ENCODE measurements at regions of chr2 and their contacts with region 1.

Region 1: GRCh38 chr2:212665948-212666347 is 127.3 kb upstream of the ERBB4 start:
- DNase-seq: no peak
- ATAC-seq: no peak
- H3K4me3 ChIP-seq: no peak overlapping the region
- H3K4me3 Mint-ChIP-seq: no peak overlapping the region
- H3K27ac ChIP-seq: no peak overlapping the region
- H3K27ac Mint-ChIP-seq: no peak overlapping the region
- H3K4me1 ChIP-seq: no peaks in the 10 kb centered on the region
- H3K4me1 Mint-ChIP-seq: no peaks in the 10 kb centered on the region
- H3K27me3 ChIP-seq: no peaks in the 10 kb centered on the region
- H3K27me3 Mint-ChIP-seq: peaks cover 8% of the 10 kb centered on the region
- CTCF ChIP-seq: no peak

Region 2: GRCh38 chr2:212556296-212556695 is 109.7 kb before region 1 on chr2:
- CTCF ChIA-PET with region 1: no interaction called
- POLR2A ChIA-PET with region 1: no interaction called
- intact Hi-C with region 1: no loop called
- DNase-seq: no peak
- ATAC-seq: no peak
- H3K4me3 ChIP-seq: no peak overlapping the region
- H3K4me3 Mint-ChIP-seq: no peak overlapping the region
- H3K27ac ChIP-seq: no peak overlapping the region
- H3K27ac Mint-ChIP-seq: no peak overlapping the region
- H3K4me1 ChIP-seq: no peaks in the 10 kb centered on the region
- H3K4me1 Mint-ChIP-seq: no peaks in the 10 kb centered on the region
- H3K27me3 ChIP-seq: no peaks in the 10 kb centered on the region
- H3K27me3 Mint-ChIP-seq: no peaks in the 10 kb centered on the region
- CTCF ChIP-seq: no peak

Region 3: GRCh38 chr2:212626371-212626918 is 39.5 kb before region 1 on chr2:
- CTCF ChIA-PET with region 1: no interaction called
- POLR2A ChIA-PET with region 1: no interaction called
- intact Hi-C with region 1: loop called in 1 of 2 experiments (anchors 1 kb)
- DNase-seq: no peak
- ATAC-seq: no peak
- H3K4me3 ChIP-seq: no peak overlapping the region
- H3K4me3 Mint-ChIP-seq: no peak overlapping the region
- H3K27ac ChIP-seq: no peak overlapping the region
- H3K27ac Mint-ChIP-seq: no peak overlapping the region
- H3K4me1 ChIP-seq: no peaks in the 10 kb centered on the region
- H3K4me1 Mint-ChIP-seq: no peaks in the 10 kb centered on the region
- H3K27me3 ChIP-seq: no peaks in the 10 kb centered on the region
- H3K27me3 Mint-ChIP-seq: no peaks in the 10 kb centered on the region
- CTCF ChIP-seq: no peak